Activated CD8-positive, alpha-beta T cell treated with anti-CD3 and anti-CD28 coated beads, Interleukin-2, amount 10 ng/mL, durations not matched to agents 7 days and 5 days (primary cell): ENCODE measurements at regions of chr2 and their contacts with region 1.

Region 1: GRCh38 chr2:232292395-232293154 is 86.0 kb upstream of the ALPP start:
- DNase-seq: peak; percentile 77
- ATAC-seq: peak; percentile 82
- H3K4me3 Mint-ChIP-seq: no peak overlapping the region
- H3K27ac Mint-ChIP-seq: peak overlapping the region; percentile 69
- H3K4me1 Mint-ChIP-seq: peaks cover 11% of the 10 kb centered on the region
- H3K27me3 Mint-ChIP-seq: no peaks in the 10 kb centered on the region

Region 2: DNA sequence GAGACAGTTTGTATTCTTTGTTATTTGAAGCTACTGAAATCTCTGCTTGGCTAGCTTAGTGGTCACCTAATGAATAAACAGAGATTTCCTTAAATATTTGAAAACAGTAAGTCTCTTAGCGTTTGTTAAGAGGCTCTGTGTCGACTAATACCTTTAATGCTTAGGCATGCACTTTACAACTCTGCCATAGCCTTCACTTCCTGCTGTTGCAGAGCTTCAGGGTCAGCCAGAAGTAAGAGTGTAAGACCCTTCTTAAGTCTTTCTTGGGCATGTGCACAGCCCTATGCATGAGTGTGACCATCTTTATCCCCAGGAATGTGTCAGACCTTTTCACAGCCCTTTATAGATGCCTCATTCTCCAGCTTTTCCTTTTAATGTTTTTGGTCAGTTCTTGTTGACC is 109.3 kb before region 1 on chr2:
- CTCF ChIA-PET with region 1: no interaction called
- POLR2A ChIA-PET with region 1: no interaction called
- DNase-seq: no peak
- ATAC-seq: no peak
- H3K4me3 Mint-ChIP-seq: no peak overlapping the region
- H3K27ac Mint-ChIP-seq: no peak overlapping the region
- H3K4me1 Mint-ChIP-seq: no peaks in the 10 kb centered on the region
- H3K27me3 Mint-ChIP-seq: no peaks in the 10 kb centered on the region

Region 3: DNA sequence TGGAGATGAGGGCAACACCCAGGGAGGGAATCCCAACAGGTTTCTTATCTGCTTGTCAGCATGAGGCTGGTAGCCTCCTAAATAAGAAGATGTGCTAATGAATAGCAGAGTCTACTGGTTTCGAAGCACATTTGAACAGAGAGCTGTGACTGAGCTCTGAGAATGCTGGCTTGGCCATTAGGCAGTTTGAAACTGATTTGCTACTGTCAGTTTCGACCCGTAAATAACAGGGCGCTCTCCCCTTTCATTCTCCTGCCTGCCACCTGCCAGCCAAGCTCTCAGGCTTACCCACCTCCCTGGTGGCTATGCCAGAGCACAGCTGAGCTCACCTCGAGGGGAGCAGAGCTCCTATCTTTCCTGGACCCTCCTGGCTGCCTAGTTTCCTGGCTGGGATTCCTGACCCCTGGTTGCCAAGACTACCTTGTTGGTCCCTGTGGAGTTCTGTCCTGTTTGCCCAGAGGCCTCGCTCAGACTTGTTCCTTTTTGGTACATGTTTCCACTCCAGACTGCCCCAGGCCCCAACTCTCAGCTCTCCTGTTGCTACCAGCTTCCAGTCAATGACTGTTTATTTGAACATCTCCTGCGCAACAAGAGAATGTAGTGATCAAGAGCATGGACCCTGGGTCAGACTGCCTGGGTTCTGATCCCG is 16.4 kb before region 1 on chr2:
- CTCF ChIA-PET with region 1: interaction called, 35 read pairs
- POLR2A ChIA-PET with region 1: no interaction called
- DNase-seq: no peak
- ATAC-seq: no peak
- H3K4me3 Mint-ChIP-seq: no peak overlapping the region
- H3K27ac Mint-ChIP-seq: no peak overlapping the region
- H3K4me1 Mint-ChIP-seq: peaks cover 6% of the 10 kb centered on the region
- H3K27me3 Mint-ChIP-seq: no peaks in the 10 kb centered on the region

Region 4: DNA sequence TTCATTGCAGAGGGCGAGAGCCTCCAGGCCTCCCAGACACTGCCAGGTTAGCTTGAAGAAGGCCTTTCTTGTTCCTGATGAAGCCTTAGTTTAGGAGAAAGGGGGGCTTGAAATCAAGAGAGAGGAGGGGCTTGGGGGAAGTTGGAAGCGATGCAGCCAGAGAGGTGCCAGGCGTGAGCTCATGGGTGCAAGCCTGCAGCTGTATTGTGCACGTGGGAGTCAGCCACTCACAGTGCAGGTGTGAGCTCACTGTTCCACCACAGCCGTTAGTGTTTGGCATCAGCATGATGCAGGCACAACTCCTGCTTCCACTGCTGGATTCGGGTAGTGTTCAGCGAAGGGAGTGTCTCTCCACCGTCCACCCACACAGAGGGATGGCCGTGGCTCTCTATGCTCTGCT is 17.5 kb after region 1 on chr2:
- CTCF ChIA-PET with region 1: interaction called, 92 read pairs
- POLR2A ChIA-PET with region 1: interaction called, 3 read pairs
- DNase-seq: peak; percentile 53
- ATAC-seq: peak; percentile 61
- H3K4me3 Mint-ChIP-seq: peak overlapping the region; percentile 53
- H3K27ac Mint-ChIP-seq: peak overlapping the region; percentile 85
- H3K4me1 Mint-ChIP-seq: peaks cover 79% of the 10 kb centered on the region
- H3K27me3 Mint-ChIP-seq: no peaks in the 10 kb centered on the region

Region 5: DNA sequence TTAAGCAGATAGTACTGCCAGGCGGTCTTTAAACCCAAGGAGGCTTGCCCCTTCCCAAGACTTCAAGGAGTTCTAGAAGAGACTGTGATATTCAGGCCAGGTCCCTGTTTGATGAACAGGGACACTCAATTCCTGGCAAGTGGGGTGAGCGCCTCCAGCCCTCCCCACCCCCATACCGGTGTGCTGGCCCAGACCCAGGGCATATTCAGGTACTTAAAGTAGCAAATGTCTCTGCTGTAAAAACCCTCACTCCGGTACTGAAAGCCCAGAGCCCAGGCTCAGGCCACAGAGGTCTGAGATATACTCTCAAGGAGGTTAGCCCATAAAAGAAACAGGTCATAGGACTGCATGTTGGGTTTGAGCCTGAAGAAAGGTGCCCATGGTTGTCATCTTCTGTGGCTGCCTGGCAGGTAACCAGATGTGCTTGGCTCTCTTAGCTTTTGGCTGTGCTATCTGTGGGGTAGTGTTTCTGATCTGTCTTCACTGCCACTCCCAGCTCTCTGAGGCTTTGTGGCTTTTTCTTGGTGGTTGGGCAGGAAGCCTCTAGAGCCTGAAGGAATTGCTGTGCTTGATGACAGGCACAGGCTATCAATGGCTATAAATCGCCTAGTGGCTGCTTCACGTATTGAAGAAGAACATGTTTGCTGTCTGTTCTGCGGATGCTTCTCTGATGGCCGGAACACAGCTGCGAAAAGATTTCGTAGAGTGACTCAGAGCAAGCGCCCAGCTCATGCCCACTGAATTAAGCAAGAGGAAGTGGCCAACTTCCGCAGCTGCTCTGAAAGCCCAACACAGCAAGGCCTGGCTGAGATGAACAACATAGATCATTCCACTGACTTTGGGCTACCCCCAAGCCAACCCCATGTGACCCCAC is 22.7 kb after region 1 on chr2:
- CTCF ChIA-PET with region 1: interaction called, 92 read pairs
- POLR2A ChIA-PET with region 1: no interaction called
- DNase-seq: peak; percentile 92
- ATAC-seq: peak; percentile 88
- H3K4me3 Mint-ChIP-seq: peak overlapping the region; percentile 42
- H3K27ac Mint-ChIP-seq: peak overlapping the region; percentile 96
- H3K4me1 Mint-ChIP-seq: peaks cover 92% of the 10 kb centered on the region
- H3K27me3 Mint-ChIP-seq: no peaks in the 10 kb centered on the region